B cell (primary cell): ENCODE measurements at regions of chr1 and their contacts with region 1.

Region 1: GRCh38 chr1:211788626-211789025 is 41.9 kb downstream of the LPGAT1 start:
- DNase-seq: no peak
- ATAC-seq: no peak
- H3K4me3 ChIP-seq: no peak overlapping the region
- H3K4me3 Mint-ChIP-seq: no peak overlapping the region
- H3K27ac ChIP-seq: no peak overlapping the region
- H3K27ac Mint-ChIP-seq: no peak overlapping the region
- H3K4me1 ChIP-seq: no peaks in the 10 kb centered on the region
- H3K4me1 Mint-ChIP-seq: peaks cover 4% of the 10 kb centered on the region
- H3K27me3 ChIP-seq: no peaks in the 10 kb centered on the region
- H3K27me3 Mint-ChIP-seq: no peaks in the 10 kb centered on the region
- CTCF ChIP-seq: no peak

Region 2: GRCh38 chr1:211724687-211725196 is 63.9 kb before region 1 on chr1:
- CTCF ChIA-PET with region 1: no interaction called
- POLR2A ChIA-PET with region 1: no interaction called
- intact Hi-C with region 1: no loop called
- DNase-seq: no peak
- ATAC-seq: no peak
- H3K4me3 ChIP-seq: no peak overlapping the region
- H3K4me3 Mint-ChIP-seq: no peak overlapping the region
- H3K27ac ChIP-seq: no peak overlapping the region
- H3K27ac Mint-ChIP-seq: no peak overlapping the region
- H3K4me1 ChIP-seq: no peaks in the 10 kb centered on the region
- H3K4me1 Mint-ChIP-seq: no peaks in the 10 kb centered on the region
- H3K27me3 ChIP-seq: no peaks in the 10 kb centered on the region
- H3K27me3 Mint-ChIP-seq: peaks cover 14% of the 10 kb centered on the region
- CTCF ChIP-seq: no peak

Region 3: DNA sequence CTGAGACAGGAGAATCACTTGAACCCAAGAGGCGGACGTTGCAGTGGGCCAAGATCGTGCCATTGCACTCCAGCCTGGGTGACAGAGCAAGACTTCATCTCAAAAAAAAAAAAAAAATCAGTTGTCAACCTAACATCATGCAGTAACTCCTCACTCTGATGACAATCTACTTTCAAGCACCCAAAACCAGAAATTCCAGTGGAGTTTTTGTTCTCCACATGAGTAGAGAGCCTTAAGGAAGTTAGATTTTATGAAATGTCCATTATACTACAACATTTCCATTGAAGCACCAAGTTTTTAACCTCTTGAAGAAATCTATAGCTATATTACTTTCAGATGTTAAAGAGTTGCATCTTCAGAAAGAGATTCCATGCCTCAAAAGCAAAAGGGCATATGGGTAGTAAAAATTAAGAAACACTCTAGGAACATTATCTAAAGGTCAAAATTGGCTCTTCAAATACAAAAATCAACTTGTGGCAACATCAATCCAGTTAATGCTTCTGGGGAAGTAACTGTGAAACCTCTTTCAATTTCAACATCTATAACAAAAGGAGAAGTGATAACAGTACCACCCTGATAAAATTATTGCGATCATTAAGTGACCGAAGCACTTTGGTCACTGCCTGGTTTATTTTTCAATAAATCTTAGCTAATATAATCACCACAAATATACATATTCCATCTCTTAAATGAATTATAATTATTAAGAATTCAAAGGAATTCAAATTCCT is 34.2 kb after region 1 on chr1:
- CTCF ChIA-PET with region 1: no interaction called
- POLR2A ChIA-PET with region 1: no interaction called
- intact Hi-C with region 1: loop called (anchors 5 kb)
- DNase-seq: peak; percentile 17
- ATAC-seq: peak; percentile 28
- H3K4me3 ChIP-seq: no peak overlapping the region
- H3K4me3 Mint-ChIP-seq: no peak overlapping the region
- H3K27ac ChIP-seq: peak overlapping the region in 1 of 2 donors; percentile 64
- H3K27ac Mint-ChIP-seq: peak overlapping the region; percentile 17
- H3K4me1 ChIP-seq: peaks cover 13 to 17% of the 10 kb centered on the region in 2 donors
- H3K4me1 Mint-ChIP-seq: peaks cover 41% of the 10 kb centered on the region
- H3K27me3 ChIP-seq: no peaks in the 10 kb centered on the region
- H3K27me3 Mint-ChIP-seq: no peaks in the 10 kb centered on the region
- CTCF ChIP-seq: no peak